B cell (primary cell): ENCODE measurements at regions of chrX and their contacts with region 1.

Region 1: GRCh38 chrX:2707334-2707760 is 16.3 kb downstream of the CD99 start:
- DNase-seq: peak; percentile 92
- ATAC-seq: peak; percentile 85
- H3K4me3 ChIP-seq: peak overlapping the region in 1 of 5 experiments; percentile 47
- H3K4me3 Mint-ChIP-seq: peak overlapping the region; percentile 73
- H3K27ac ChIP-seq: peak overlapping the region; percentile 72
- H3K27ac Mint-ChIP-seq: peak overlapping the region; percentile 89
- H3K4me1 ChIP-seq: peaks cover 49 to 68% of the 10 kb centered on the region in 2 donors
- H3K4me1 Mint-ChIP-seq: peaks cover 76% of the 10 kb centered on the region
- H3K27me3 ChIP-seq: no peaks in the 10 kb centered on the region
- H3K27me3 Mint-ChIP-seq: no peaks in the 10 kb centered on the region
- CTCF ChIP-seq: no peak

Region 2: DNA sequence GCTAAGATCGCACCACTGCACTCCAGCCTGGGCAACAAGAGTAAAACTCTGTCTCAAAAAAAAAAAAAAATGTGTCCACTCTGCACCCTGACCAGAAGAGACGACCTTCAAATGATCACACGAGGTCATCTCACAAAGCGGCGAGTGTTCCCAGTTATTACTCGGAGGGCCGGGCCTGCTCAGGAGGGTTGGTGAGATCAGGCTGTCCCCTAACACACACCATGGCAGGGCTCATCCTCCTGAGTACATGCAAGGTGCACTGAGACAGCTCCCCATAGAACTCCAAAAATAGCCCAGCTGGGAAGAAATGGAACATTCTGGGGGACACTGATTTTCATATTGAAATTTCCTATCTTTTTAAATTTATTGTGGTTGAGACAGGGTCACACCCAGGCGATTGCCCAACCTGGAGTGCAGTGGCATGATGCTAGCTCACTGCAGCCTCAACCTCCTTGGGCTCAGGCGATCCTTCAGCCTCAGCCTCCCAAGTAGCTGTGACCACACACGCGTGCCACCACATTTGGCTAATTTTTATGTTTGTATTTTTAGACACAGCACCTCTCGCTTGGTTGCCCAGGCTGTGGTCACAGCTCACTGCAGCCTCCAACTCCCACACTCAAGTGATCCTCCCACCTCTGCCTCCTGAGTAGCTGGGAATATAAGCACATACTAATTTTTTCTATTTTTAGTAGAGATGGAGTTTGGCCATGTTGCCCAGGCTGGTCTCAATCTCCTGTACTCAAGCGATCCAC is 258.0 kb before region 1 on chrX:
- CTCF ChIA-PET with region 1: no interaction called
- POLR2A ChIA-PET with region 1: no interaction called
- intact Hi-C with region 1: no loop called
- DNase-seq: peak; percentile 40
- ATAC-seq: no peak
- H3K4me3 ChIP-seq: no peak overlapping the region
- H3K4me3 Mint-ChIP-seq: no peak overlapping the region
- H3K27ac ChIP-seq: no peak overlapping the region
- H3K27ac Mint-ChIP-seq: no peak overlapping the region
- H3K4me1 ChIP-seq: peaks cover 0 to 13% of the 10 kb centered on the region in 2 donors
- H3K4me1 Mint-ChIP-seq: peaks cover 7% of the 10 kb centered on the region
- H3K27me3 ChIP-seq: no peaks in the 10 kb centered on the region
- H3K27me3 Mint-ChIP-seq: no peaks in the 10 kb centered on the region
- CTCF ChIP-seq: no peak

Region 3: DNA sequence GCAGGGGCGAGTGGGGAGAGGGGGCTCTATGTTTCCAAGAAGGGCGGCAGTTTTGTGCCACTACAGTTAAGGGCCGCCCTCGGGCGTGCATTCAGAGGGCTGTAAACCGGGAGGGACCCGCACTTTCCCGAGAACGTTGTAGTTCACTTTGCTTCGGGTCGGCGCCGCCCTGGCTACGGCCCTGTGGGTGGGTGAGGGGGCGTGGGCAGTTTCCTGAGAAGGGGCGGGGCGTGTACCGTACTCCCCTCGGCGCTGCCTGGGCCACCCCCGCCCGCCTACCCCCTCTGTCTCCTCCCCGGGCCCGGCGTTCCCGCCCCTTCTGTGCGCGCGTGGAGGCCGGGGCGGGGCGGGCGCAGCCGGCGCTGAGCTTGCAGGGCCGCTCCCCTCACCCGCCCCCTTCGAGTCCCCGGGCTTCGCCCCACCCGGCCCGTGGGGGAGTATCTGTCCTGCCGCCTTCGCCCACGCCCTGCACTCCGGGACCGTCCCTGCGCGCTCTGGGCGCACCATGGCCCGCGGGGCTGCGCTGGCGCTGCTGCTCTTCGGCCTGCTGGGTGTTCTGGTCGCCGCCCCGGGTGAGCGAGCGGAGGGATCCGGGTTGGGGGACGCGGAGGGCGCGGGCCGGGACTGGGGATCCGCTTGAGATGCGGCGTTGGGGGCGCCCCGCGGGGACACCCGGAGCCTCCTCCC is 16.3 kb before region 1 on chrX and contains the start of gene CD99:
- CTCF ChIA-PET with region 1: no interaction called
- POLR2A ChIA-PET with region 1: no interaction called
- intact Hi-C with region 1: loop called (anchors 1 kb)
- DNase-seq: peak; percentile 94
- ATAC-seq: peak; percentile 92
- H3K4me3 ChIP-seq: peak within 1 kb of the TSS; percentile 67 to 99 (median 84)
- H3K4me3 Mint-ChIP-seq: peak within 1 kb of the TSS; percentile 87
- H3K27ac ChIP-seq: peak within 1 kb of the TSS; percentile 26 to 50
- H3K27ac Mint-ChIP-seq: peak within 1 kb of the TSS; percentile 82
- H3K4me1 ChIP-seq: peaks cover 27 to 46% of the 10 kb centered on the region in 2 donors
- H3K4me1 Mint-ChIP-seq: peaks cover 39% of the 10 kb centered on the region
- H3K27me3 ChIP-seq: no peaks in the 10 kb centered on the region
- H3K27me3 Mint-ChIP-seq: no peaks in the 10 kb centered on the region
- CTCF ChIP-seq: no peak
- total RNA-seq, gene CD99: 133 TPM in 2 replicates

Region 4: DNA sequence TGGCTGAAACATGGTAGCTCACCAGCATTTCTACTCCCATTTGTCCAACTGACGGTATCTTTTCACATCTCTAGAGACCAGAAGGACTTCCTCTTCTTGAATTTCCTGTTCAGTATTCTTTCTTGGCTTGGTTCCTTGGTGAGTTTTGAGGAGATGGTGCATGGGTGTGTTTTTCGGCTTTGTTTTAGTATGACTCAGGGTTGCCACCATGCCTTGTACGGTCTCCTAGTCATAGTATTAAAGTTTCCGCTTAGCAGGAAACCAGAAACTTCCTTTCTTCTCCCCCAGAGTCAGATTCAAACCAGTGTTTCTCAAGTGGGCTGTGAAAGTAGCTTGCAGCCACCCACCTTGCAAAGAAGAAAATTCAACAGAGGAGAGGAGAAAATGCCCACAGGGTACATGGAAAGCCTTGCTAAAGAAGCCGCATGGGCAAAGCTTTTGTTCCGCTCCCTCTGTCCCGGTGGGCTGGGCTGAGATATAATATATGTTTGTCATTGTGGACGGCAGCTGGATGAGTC is 10.6 kb before region 1 on chrX:
- CTCF ChIA-PET with region 1: no interaction called
- POLR2A ChIA-PET with region 1: no interaction called
- intact Hi-C with region 1: loop called (anchors 1 kb)
- DNase-seq: peak; percentile 71
- ATAC-seq: peak; percentile 78
- H3K4me3 ChIP-seq: peak overlapping the region in 3 of 5 experiments; percentile 6 to 38 (median 15)
- H3K4me3 Mint-ChIP-seq: peak overlapping the region; percentile 60
- H3K27ac ChIP-seq: peak overlapping the region; percentile 48 to 62
- H3K27ac Mint-ChIP-seq: peak overlapping the region; percentile 83
- H3K4me1 ChIP-seq: peaks cover 64 to 83% of the 10 kb centered on the region in 2 donors
- H3K4me1 Mint-ChIP-seq: peaks cover 90% of the 10 kb centered on the region
- H3K27me3 ChIP-seq: no peaks in the 10 kb centered on the region
- H3K27me3 Mint-ChIP-seq: no peaks in the 10 kb centered on the region
- CTCF ChIP-seq: no peak

Region 5: DNA sequence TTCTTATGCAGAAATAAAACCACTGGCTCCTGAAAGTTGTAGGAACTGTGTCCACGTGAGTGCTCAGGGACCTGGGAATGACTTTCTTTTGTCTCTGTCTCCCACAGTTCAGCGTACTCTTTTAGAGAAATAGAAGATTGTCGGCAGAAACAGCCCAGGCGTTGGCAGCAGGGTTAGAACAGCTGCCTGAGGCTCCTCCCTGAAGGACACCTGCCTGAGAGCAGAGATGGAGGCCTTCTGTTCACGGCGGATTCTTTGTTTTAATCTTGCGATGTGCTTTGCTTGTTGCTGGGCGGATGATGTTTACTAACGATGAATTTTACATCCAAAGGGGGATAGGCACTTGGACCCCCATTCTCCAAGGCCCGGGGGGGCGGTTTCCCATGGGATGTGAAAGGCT is 33.3 kb after region 1 on chrX:
- CTCF ChIA-PET with region 1: no interaction called
- POLR2A ChIA-PET with region 1: no interaction called
- intact Hi-C with region 1: loop called (anchors 5 kb)
- DNase-seq: no peak
- ATAC-seq: no peak
- H3K4me3 ChIP-seq: no peak overlapping the region
- H3K4me3 Mint-ChIP-seq: no peak overlapping the region
- H3K27ac ChIP-seq: no peak overlapping the region
- H3K27ac Mint-ChIP-seq: no peak overlapping the region
- H3K4me1 ChIP-seq: no peaks in the 10 kb centered on the region
- H3K4me1 Mint-ChIP-seq: no peaks in the 10 kb centered on the region
- H3K27me3 ChIP-seq: no peaks in the 10 kb centered on the region
- H3K27me3 Mint-ChIP-seq: no peaks in the 10 kb centered on the region
- CTCF ChIP-seq: no peak